Activated CD4-positive, alpha-beta T cell treated with anti-CD3 and anti-CD28 coated beads, Interleukin-2, amount 10 ng/mL, durations not matched to agents 24 days and 14 days (primary cell): ENCODE measurements at regions of chr7 and their contacts with region 1.

Region 1: DNA sequence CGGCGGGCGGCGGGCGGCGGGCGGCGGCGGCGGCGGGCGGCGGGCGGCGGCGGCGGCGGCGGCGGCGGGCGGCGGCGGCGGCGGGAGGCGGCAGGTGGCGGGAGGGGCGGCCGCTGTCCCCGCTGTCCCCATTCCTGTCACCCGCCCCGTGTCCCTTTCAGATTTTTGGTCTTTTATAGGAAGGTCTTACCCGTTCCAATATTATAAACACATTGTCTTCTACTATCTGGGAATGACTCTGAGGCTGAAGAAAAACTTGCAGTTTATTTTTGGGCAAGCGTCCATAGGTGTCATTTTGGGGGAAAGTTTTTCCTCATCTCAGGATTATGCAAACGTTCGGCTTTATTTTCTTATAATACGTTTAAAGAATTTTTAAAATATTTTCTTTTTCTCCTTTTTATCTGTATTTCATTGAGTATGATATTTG is 578 bp downstream of the ZNF713 start:
- DNase-seq: peak; percentile 64
- H3K4me3 Mint-ChIP-seq: peak overlapping the region; percentile 82
- H3K27ac Mint-ChIP-seq: peak overlapping the region; percentile 88
- H3K4me1 Mint-ChIP-seq: peaks cover 8% of the 10 kb centered on the region
- H3K27me3 Mint-ChIP-seq: no peaks in the 10 kb centered on the region

Region 2: DNA sequence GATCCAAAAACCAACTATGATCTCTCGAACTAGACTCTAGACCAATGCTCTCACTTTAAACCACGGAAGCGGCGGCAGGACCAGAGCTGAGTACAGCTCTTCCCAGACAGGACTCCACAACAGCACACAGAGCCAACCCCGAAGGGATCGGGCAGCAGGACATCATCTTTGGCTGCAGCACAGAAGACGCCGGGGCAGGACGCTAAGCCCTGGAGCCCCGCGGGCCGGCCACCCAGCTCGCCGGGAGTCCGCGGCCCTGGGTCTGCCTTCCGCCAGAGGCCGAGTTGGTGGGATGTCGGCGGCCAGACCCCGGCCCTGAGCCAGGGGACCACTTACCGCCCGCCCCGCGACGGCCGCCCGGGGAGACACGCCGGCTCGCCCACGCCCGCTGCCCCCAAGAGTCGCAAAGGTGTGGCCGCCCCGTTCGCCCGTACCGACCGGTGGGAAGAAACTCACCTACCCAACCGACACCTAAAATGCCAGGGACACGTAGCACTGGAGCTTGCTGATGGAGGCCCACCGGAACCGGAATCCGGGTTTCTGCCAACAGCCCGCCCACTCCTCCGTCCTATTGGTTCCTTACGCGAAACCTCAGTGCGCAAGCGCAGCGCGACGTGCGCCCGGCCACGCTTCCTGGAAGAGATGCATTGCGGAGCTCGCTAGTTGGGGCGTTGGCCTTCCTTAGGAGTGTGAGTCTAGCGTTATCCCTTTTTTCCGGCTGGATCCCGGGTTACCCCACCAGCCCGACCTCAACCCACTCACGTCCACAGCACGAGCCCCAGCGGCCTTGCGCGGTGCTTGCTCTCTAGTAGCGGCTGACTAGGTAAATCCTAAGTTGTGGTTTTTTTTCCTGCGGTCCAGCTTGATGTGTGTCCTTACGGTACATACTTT is 1128.9 kb before region 1 on chr7 and contains the start of gene SEC61G:
- intact Hi-C with region 1: loop called (anchors 10 kb)
- DNase-seq: peak; percentile 99
- H3K4me3 Mint-ChIP-seq: peak within 1 kb of the TSS; percentile 97
- H3K27ac Mint-ChIP-seq: peak within 1 kb of the TSS; percentile 99
- H3K4me1 Mint-ChIP-seq: peaks cover 27% of the 10 kb centered on the region
- H3K27me3 Mint-ChIP-seq: peaks cover 14% of the 10 kb centered on the region
- total RNA-seq, gene SEC61G: 170 and 176 TPM in 2 replicates

Region 3: GRCh38 chr7:55538538-55538937 is 349.3 kb before region 1 on chr7:
- intact Hi-C with region 1: no loop called
- DNase-seq: no peak
- H3K4me3 Mint-ChIP-seq: no peak overlapping the region
- H3K27ac Mint-ChIP-seq: peak overlapping the region; percentile 56
- H3K4me1 Mint-ChIP-seq: peaks cover 65% of the 10 kb centered on the region
- H3K27me3 Mint-ChIP-seq: no peaks in the 10 kb centered on the region

Region 4: GRCh38 chr7:55641273-55641691 is 246.6 kb before region 1 on chr7:
- intact Hi-C with region 1: loop called (anchors 1 kb)
- DNase-seq: peak; percentile 83
- H3K4me3 Mint-ChIP-seq: no peak overlapping the region
- H3K27ac Mint-ChIP-seq: no peak overlapping the region
- H3K4me1 Mint-ChIP-seq: peaks cover 8% of the 10 kb centered on the region
- H3K27me3 Mint-ChIP-seq: peaks cover 9% of the 10 kb centered on the region

Region 5: GRCh38 chr7:55951637-55952351 is 64.0 kb after region 1 on chr7 and contains the start of gene MRPS17:
- intact Hi-C with region 1: loop called (anchors 5 kb)
- DNase-seq: peak; percentile 98
- H3K4me3 Mint-ChIP-seq: peak within 1 kb of the TSS; percentile 98
- H3K27ac Mint-ChIP-seq: peak within 1 kb of the TSS; percentile 98
- H3K4me1 Mint-ChIP-seq: peaks cover 10% of the 10 kb centered on the region
- H3K27me3 Mint-ChIP-seq: no peaks in the 10 kb centered on the region
- total RNA-seq, gene MRPS17: 36.4 and 37.6 TPM in 2 replicates